ENCODE measurements at regions of chr12 and their contacts with region 1.

Region 1: GRCh38 chr12:54337280-54337842 is 12.4 kb downstream of the COPZ1 start:
- DNase-seq: no peak
- H3K4me3 ChIP-seq: no peak overlapping the region
- H3K27ac ChIP-seq: no peak overlapping the region; a peak in 1 of 4 replicates
- H3K4me1 ChIP-seq: peaks cover 0 to 5% of the 10 kb centered on the region in 2 experiments; a peak in 1 of 4 replicates
- H3K27me3 ChIP-seq: no peaks in the 10 kb centered on the region
- CTCF ChIP-seq: no peak
- EP300 ChIP-seq: peak in 1 of 2 experiments; percentile 22; a peak in 1 of 4 replicates
- RAD21 ChIP-seq: peak; percentile 65

Region 2: DNA sequence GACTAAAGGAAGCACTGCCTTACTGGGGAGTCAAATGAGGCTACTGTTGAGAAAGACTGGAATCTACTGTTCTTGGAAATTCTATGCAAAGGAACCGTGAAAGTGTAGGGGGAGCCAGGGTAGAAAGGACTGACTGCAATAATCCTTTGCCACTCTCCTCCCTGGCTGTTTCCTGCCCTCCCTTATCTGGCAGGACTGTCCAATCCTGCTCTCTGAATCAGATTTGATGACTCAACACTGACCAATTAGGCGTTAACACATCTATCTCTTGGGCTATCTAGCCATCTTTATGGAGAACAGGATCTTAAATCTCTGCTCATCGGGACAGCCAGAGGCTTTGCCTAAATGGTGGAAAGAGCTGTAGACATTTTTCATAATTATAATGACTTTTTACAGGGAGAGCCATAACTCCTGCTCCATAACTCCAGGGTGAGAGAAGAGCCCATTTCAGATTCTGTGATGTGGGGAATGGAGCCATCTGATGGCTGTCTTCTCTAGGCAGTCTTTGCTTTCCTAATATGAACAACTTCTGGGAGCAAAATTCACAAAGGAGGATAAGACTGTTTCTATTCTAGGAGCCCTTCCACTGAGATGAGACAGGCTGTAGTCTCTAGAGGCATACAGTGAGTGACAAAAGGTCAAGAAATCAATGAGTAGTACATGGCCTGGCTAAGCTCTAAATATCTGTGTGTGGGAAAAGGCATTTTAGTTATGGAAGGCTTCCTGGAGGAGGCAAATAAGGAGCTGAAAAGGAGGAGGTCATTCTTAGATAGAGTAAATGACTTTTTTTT is 516.6 kb before region 1 on chr12:
- CTCF ChIA-PET with region 1: no interaction called
- POLR2A ChIA-PET with region 1: no interaction called
- DNase-seq: no peak
- H3K4me3 ChIP-seq: no peak overlapping the region
- H3K27ac ChIP-seq: no peak overlapping the region
- H3K4me1 ChIP-seq: no peaks in the 10 kb centered on the region
- H3K27me3 ChIP-seq: peaks cover 44% of the 10 kb centered on the region
- CTCF ChIP-seq: no peak
- EP300 ChIP-seq: no peak
- RAD21 ChIP-seq: no peak

Region 3: DNA sequence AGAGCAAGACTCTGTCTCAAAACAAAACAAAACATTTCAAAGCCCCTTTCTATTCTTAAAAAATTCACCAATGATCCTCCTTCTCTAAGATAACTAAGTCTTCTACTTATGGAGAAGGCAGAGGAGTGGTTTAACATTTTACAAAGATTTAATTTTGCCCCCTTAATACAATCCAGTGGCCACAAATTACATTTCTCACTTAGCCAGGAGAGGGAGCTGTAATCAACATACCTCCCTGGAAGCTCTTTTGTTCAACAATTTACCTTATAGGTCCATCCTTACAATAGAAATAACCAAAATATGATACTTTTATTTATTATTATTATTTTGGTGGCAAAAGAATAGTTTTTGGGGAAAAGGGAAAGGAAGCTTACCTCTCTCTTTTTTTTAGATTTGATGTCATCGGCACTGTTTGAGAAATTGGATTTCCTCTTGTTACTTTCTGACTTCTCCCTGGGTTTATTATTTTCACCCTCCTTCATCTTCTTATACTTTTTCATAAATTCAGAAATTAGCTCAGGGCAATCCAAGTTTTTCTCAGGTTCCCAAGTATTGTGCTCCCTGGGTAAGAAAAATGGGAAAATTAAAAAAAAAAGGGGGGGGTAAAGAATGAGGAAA is 85.6 kb before region 1 on chr12:
- CTCF ChIA-PET with region 1: interaction called, 11 read pairs
- POLR2A ChIA-PET with region 1: no interaction called
- DNase-seq: peak; percentile 73
- H3K4me3 ChIP-seq: no peak overlapping the region
- H3K27ac ChIP-seq: peak overlapping the region in 1 of 2 experiments; percentile 43; a peak in 2 of 4 replicates
- H3K4me1 ChIP-seq: peaks cover 0 to 4% of the 10 kb centered on the region in 2 experiments; a peak in 2 of 4 replicates
- H3K27me3 ChIP-seq: no peaks in the 10 kb centered on the region
- CTCF ChIP-seq: peak; percentile 87
- EP300 ChIP-seq: no peak
- RAD21 ChIP-seq: peak; percentile 78

Region 4: GRCh38 chr12:54300732-54301427 is 36.5 kb before region 1 on chr12 and contains the start of gene NFE2:
- CTCF ChIA-PET with region 1: interaction called, 18 read pairs
- POLR2A ChIA-PET with region 1: no interaction called
- DNase-seq: peak; percentile 49
- H3K4me3 ChIP-seq: peak within 1 kb of the TSS in 1 of 2 experiments; percentile 14; a peak in 1 of 4 replicates
- H3K27ac ChIP-seq: no peak within 1 kb of the TSS
- H3K4me1 ChIP-seq: peaks cover 0 to 10% of the 10 kb centered on the region in 2 experiments; a peak in 1 of 4 replicates
- H3K27me3 ChIP-seq: no peaks in the 10 kb centered on the region; the same call in 1 of the 2 replicates
- CTCF ChIP-seq: no peak
- EP300 ChIP-seq: no peak
- RAD21 ChIP-seq: no peak
- polyA plus RNA-seq, gene NFE2: 0.16 and 0.25 TPM in 2 replicates

Region 5: DNA sequence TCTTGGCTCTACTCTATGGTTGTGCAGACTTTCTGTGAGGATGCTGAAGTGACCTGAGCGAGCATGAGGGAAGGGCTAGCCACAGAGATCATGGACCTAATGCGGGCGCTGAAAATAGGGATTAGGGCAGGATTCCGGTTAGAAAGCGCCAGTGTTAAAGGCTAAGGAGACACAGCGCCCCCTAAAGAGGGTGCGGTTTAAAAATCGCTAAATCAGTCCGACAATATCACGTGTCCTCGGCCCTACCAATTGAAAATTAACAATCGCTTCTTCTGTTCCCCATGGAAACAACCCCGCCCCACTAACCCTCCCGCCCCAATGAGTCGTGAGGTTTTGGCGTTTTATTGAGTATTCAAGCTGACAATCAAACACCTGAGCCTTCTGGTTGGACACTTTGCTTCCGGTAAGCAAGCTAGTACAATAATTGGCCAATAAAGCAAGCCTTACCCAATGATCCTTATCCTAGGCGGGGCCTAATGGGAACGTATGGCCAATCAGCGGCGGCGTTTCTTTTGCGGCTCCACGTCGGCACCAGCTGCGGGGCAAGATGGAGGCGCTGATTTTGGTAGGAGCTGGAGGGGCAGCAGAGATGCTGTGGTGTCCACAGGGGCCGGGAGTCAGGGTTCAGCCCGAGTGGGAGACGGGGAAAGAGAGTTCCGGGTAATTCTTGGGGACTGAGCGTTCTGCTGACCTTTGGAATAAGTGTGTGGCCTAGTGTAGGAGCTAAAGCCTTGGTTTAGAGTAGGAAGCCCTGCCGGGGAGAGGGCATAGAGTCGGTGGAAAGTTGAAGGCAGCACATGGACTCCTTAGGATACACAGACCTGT is 12.5 kb before region 1 on chr12 and contains the start of gene COPZ1:
- CTCF ChIA-PET with region 1: interaction called, 76 read pairs
- POLR2A ChIA-PET with region 1: interaction called, 3 read pairs
- DNase-seq: peak; percentile 90
- H3K4me3 ChIP-seq: peak within 1 kb of the TSS; percentile 68 to 86
- H3K27ac ChIP-seq: peak within 1 kb of the TSS; percentile 77 to 81
- H3K4me1 ChIP-seq: peaks cover 0 to 9% of the 10 kb centered on the region in 2 experiments; a peak in 2 of 4 replicates
- H3K27me3 ChIP-seq: no peaks in the 10 kb centered on the region
- CTCF ChIP-seq: peak; percentile 84
- EP300 ChIP-seq: 0 out of 4 replicates have a peak, but pooled peaks of 1 of the 2 experiments have one; percentile 35
- RAD21 ChIP-seq: peak; percentile 80
- polyA plus RNA-seq, gene COPZ1: 111 and 156 TPM in 2 replicates

Region 6: GRCh38 chr12:54359033-54359761 is 21.8 kb after region 1 on chr12:
- CTCF ChIA-PET with region 1: interaction called, 266 read pairs
- POLR2A ChIA-PET with region 1: interaction called, 9 read pairs
- DNase-seq: peak; percentile 91
- H3K4me3 ChIP-seq: peak overlapping the region; percentile 55 to 76
- H3K27ac ChIP-seq: peak overlapping the region; percentile 79 to 99
- H3K4me1 ChIP-seq: peaks cover 27 to 47% of the 10 kb centered on the region in 2 experiments
- H3K27me3 ChIP-seq: no peaks in the 10 kb centered on the region
- CTCF ChIP-seq: no peak
- EP300 ChIP-seq: peak; percentile 68 to 89; a peak in 3 of 4 replicates
- RAD21 ChIP-seq: no peak

Region 7: DNA sequence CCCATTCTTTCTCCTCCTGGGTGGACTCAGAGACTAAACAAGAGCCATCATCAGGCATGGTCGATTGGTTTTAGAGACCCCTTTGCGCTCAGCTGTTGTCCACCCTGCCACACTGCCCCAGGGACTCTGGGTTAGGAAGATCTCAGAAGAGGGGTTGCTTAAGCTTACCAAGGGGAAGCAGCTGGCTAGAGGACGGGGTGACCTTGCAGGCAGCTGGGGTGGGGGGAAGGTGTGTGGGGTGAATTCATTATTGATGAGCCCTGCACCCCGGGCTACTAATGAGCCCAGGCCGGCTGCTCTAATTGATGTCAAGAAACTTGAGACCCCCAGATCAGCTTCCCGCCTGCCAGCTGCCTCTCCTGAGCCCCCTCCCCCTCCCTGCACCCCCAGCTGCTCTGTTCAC is 55.8 kb after region 1 on chr12:
- CTCF ChIA-PET with region 1: no interaction called
- POLR2A ChIA-PET with region 1: no interaction called
- DNase-seq: no peak
- H3K4me3 ChIP-seq: no peak overlapping the region
- H3K27ac ChIP-seq: no peak overlapping the region
- H3K4me1 ChIP-seq: peaks cover 0 to 13% of the 10 kb centered on the region in 2 experiments; a peak in 1 of 4 replicates
- H3K27me3 ChIP-seq: no peaks in the 10 kb centered on the region
- CTCF ChIP-seq: no peak
- EP300 ChIP-seq: no peak
- RAD21 ChIP-seq: no peak

Measured in SK-N-SH (cell line).